Mammary epithelial cell (primary cell): ENCODE measurements at regions of chr1 and their contacts with region 1.

Region 1: DNA sequence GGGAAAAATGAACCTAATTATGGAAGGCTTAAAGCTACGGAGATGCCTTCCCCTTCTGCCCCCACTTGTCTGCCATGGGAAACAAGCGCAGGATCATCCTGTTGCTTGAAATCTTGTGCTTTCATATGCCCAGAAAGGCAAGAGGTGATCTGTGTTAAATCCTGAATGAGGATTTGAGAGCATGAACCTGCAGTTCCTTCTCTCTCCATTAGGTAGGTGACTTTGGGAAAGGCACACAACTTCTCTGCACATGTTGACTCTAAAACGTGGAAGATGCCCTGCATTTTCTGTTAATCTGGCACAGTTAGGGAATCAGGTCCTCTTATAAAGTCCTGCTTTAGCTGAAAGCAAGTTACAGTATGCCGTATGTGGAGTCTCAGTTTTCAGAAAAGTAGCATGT is 46.6 kb upstream of the MTR start:
- DNase-seq: no peak
- H3K4me3 ChIP-seq: no peak overlapping the region
- H3K27ac ChIP-seq: no peak overlapping the region
- H3K4me1 ChIP-seq: no peaks in the 10 kb centered on the region
- H3K27me3 ChIP-seq: no peaks in the 10 kb centered on the region
- CTCF ChIP-seq: peak in 1 of 2 donors; percentile 4

Region 2: DNA sequence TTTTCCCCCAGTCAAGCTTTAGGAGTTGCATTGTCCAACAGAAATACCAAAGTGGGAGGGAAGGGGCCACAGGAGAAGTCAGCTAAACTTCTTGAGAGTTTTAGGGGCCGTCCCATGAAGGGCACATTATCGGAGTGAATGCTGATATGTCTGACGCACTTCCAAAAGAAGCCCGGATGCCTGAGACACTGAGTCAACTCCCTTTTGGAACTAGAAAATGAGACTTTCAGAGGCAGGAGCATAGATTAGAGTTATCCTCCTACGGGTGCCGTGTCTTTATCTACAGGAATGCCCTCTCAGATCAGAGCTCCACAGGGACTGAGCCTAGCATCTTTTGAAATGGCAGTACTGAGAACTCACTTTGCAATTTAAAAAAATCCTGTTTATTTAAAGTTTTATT is 49.1 kb before region 1 on chr1:
- CTCF ChIA-PET with region 1: no interaction called
- dilution Hi-C with region 1: loop called (anchors 5 kb)
- in situ Hi-C with region 1: no loop called
- intact Hi-C with region 1: no loop called
- DNase-seq: no peak
- H3K4me3 ChIP-seq: no peak overlapping the region
- H3K27ac ChIP-seq: no peak overlapping the region
- H3K4me1 ChIP-seq: no peaks in the 10 kb centered on the region
- H3K27me3 ChIP-seq: peaks cover 4% of the 10 kb centered on the region
- CTCF ChIP-seq: no peak